ENCODE measurements at regions of chr4 and their contacts with region 1.

Region 1: GRCh38 chr4:78809928-78810835 is 34.0 kb downstream of the BMP2K start:
- DNase-seq: no peak
- ATAC-seq: peak; percentile 71
- H3K4me3 ChIP-seq: no peak overlapping the region
- H3K27ac ChIP-seq: no peak overlapping the region
- H3K4me1 ChIP-seq: no peaks in the 10 kb centered on the region
- H3K27me3 ChIP-seq: no peaks in the 10 kb centered on the region
- CTCF ChIP-seq: no peak
- EP300 ChIP-seq: no peak
- POLR2A ChIP-seq: no peak
- RAD21 ChIP-seq: no peak

Region 2: GRCh38 chr4:78799551-78800495 is 10.4 kb before region 1 on chr4:
- CTCF ChIA-PET with region 1: interaction called, 10 read pairs
- POLR2A ChIA-PET with region 1: interaction called, 15 read pairs
- RAD21 ChIA-PET with region 1: interaction called, 7 read pairs
- SMC1A ChIA-PET with region 1: interaction called, 35 read pairs
- in situ Hi-C with region 1: no loop called
- intact Hi-C with region 1: no loop called
- DNase-seq: no peak
- ATAC-seq: peak; percentile 73
- H3K4me3 ChIP-seq: no peak overlapping the region
- H3K27ac ChIP-seq: no peak overlapping the region
- H3K4me1 ChIP-seq: peaks cover 6% of the 10 kb centered on the region; the same call in 1 of the 2 replicates
- H3K27me3 ChIP-seq: no peaks in the 10 kb centered on the region
- CTCF ChIP-seq: no peak
- EP300 ChIP-seq: no peak
- POLR2A ChIP-seq: no peak
- RAD21 ChIP-seq: no peak

Region 3: DNA sequence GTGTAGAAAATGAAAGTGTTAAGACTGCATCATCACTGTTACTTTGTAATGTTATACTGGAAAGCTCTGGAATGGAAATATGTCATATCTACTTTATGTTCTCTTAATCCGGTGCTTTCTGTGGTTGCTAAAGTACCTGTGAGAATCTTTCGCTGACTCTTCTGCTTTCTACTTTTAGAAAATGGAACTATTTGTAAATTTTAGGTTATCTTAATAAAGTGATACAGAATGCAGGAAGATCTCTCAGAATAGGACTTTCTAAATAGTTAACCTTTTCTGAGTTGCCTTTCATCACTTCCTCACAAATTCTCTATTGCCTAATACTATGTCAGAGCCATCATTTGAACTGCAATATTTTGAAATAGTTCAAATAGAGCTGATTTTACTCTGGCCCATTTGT is 35.3 kb after region 1 on chr4:
- CTCF ChIA-PET with region 1: no interaction called
- POLR2A ChIA-PET with region 1: no interaction called
- RAD21 ChIA-PET with region 1: no interaction called
- SMC1A ChIA-PET with region 1: interaction called, 12 read pairs
- in situ Hi-C with region 1: no loop called
- intact Hi-C with region 1: no loop called
- DNase-seq: peak; percentile 5
- ATAC-seq: peak; percentile 92
- H3K4me3 ChIP-seq: no peak overlapping the region; the same call in 1 of the 2 replicates
- H3K27ac ChIP-seq: no peak overlapping the region
- H3K4me1 ChIP-seq: no peaks in the 10 kb centered on the region; the same call in 1 of the 2 replicates
- H3K27me3 ChIP-seq: no peaks in the 10 kb centered on the region
- CTCF ChIP-seq: no peak
- EP300 ChIP-seq: no peak
- POLR2A ChIP-seq: no peak
- RAD21 ChIP-seq: no peak